A673 (cell line): ENCODE measurements at regions of chr17 and their contacts with region 1.

Region 1: DNA sequence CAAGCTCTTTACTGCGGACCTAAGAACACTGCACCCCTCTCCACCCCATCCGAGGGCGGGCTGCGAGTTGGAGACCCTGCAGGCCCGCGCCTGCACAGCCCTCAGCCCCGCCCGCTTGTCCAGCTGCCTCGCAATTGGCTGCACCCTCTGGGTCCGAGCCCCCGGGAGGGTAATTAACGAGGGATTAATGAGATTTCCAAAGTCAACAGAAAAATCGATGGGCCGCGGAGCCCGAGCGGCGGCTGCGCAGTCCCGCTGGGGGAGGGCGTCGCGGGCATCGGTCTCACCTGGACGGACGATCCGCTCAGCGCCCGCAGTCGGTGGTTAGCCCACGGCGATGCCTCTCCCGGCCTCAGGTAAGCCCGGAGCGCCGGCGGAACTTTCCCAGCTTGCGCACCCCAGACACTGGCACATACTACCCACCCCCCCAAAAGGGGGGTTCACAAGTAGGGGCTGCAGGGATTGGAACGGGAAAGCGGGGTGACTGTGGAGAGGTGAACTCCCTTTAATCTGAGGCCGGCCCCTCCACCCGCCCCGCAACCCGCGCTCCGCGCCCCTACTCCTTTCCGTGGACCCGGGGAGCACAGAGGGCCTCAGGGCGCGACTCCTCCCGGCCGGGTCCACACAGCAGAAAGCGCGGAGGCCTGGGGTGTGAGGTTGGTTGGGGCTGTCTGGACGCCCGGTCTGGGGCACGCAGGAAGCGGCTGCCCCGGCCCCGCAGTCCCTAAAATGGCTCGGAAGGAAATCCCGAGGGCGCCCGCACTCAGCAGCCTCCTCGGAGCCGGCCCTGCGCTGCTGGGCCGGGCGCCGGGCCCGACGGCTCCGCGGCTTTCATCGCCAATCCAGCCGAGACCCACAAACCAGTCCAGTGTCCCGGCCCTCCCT is at the start of gene OTOP3:
- DNase-seq: no peak
- H3K4me3 ChIP-seq: no peak within 1 kb of the TSS
- H3K27ac ChIP-seq: no peak within 1 kb of the TSS
- H3K4me1 ChIP-seq: no peaks in the 10 kb centered on the region
- H3K27me3 ChIP-seq: peaks cover 89% of the 10 kb centered on the region
- CTCF ChIP-seq: no peak
- total RNA-seq, gene OTOP3: not detected in 2 replicates

Region 2: GRCh38 chr17:75571197-75571873 is 635.5 kb after region 1 on chr17:
- CTCF ChIA-PET with region 1: no interaction called
- POLR2A ChIA-PET with region 1: interaction called, 12 read pairs
- intact Hi-C with region 1: no loop called
- DNase-seq: no peak
- H3K4me3 ChIP-seq: no peak overlapping the region
- H3K27ac ChIP-seq: no peak overlapping the region
- H3K4me1 ChIP-seq: no peaks in the 10 kb centered on the region
- H3K27me3 ChIP-seq: no peaks in the 10 kb centered on the region
- CTCF ChIP-seq: no peak

Region 3: GRCh38 chr17:75938116-75938515 is 1002.3 kb after region 1 on chr17:
- CTCF ChIA-PET with region 1: no interaction called
- POLR2A ChIA-PET with region 1: interaction called, 23 read pairs
- intact Hi-C with region 1: no loop called
- DNase-seq: no peak
- H3K4me3 ChIP-seq: no peak overlapping the region
- H3K27ac ChIP-seq: no peak overlapping the region
- H3K4me1 ChIP-seq: peaks cover 6% of the 10 kb centered on the region
- H3K27me3 ChIP-seq: no peaks in the 10 kb centered on the region
- CTCF ChIP-seq: no peak